Tibial artery (tissue), 4 donors: ENCODE measurements at regions of chr17 and their contacts with region 1.

Region 1: GRCh38 chr17:4881761-4882555 is 17.4 kb upstream of the C17orf107 start:
- DNase-seq: no peak
- H3K4me3 ChIP-seq: no peak overlapping the region
- H3K27ac ChIP-seq: no peak overlapping the region
- H3K4me1 ChIP-seq: peaks cover 0 to 9% (median 0%) of the 10 kb centered on the region in 4 donors
- H3K27me3 ChIP-seq: no peaks in the 10 kb centered on the region
- CTCF ChIP-seq: peak; percentile 48 to 58

Region 2: DNA sequence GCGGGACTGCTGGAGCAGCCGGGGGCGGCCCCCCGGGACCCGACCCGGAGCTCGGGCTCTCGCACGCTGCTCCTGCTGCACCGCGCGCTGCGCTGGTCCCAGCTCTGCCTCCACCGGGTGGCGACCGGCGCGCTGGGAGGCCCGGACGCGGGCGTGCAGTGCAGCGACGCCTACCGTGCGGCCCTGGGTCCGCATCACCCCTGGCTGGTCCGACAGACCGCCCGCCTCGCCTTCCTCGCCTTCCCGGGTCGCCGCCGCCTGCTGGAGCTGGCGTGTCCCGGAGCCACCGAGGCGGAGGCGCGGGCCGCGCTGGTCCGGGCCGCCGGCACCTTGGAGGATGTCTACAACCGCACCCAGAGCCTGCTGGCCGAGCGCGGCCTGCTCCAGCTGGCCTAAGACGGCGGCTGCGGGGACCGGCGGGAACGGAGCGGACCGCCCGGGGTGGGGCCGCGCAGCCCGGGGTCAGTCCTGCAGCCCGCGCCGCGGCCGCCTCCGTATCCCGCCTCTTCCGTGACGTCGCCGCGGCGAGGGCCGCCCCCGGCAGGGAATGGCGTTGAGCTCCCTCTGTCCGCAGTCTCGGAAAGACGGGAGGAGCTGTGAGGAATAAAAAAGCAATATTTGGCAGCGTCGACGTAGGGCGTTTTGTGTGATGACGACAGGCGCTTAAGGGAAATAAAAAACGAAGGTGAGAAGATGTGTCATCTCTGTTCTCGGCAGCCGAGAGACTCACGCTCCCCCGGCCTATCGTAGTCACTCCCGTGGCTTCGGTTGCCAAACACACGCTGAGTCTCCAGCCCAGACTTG is 91.9 kb before region 1 on chr17:
- intact Hi-C with region 1: loop called (anchors 5 kb)
- DNase-seq: peak; percentile 77 to 90
- H3K4me3 ChIP-seq: peak overlapping the region; percentile 66 to 73
- H3K27ac ChIP-seq: peak overlapping the region; percentile 86 to 89
- H3K4me1 ChIP-seq: peaks cover 0 to 45% (median 30%) of the 10 kb centered on the region in 4 donors
- H3K27me3 ChIP-seq: peaks cover 0 to 9% of the 10 kb centered on the region in 2 donors
- CTCF ChIP-seq: peak; percentile 79 to 81

Region 3: GRCh38 chr17:4997302-4998026 is 115.5 kb after region 1 on chr17 and contains the starts of genes INCA1 and KIF1C:
- intact Hi-C with region 1: no loop called
- DNase-seq: peak; percentile 90 to 96
- H3K4me3 ChIP-seq: peak within 1 kb of the TSS; percentile 85 to 100
- H3K27ac ChIP-seq: peak within 1 kb of the TSS; percentile 94 to 97
- H3K4me1 ChIP-seq: peaks cover 0 to 37% (median 31%) of the 10 kb centered on the region in 4 donors
- H3K27me3 ChIP-seq: no peaks in the 10 kb centered on the region
- CTCF ChIP-seq: peak; percentile 24 to 43